Stomach (tissue), 19 donors: ENCODE measurements at regions of chr12 and their contacts with region 1.

Region 1: DNA sequence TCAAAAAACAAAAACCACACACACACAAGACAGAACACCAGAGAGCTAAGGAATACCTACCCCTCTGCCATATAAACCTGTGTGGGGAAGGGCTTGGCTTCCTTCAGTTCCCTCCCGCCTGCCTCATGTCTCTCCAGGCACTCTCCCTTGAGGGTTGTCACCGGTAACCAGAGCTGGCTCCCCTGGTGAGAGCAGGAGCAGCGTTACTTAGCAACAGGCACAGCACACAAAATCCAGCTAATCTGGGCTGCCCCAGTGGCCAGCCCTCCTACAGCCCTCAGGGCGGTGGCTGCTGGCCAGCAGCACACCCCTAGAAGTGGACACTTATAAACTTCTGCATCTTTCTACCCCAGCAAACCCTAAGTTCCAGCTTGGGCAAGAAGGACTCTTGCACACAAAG is 21.6 kb upstream of the NR4A1 start:
- DNase-seq: peak; percentile 37 to 85
- H3K4me3 ChIP-seq: no peak overlapping the region
- H3K27ac ChIP-seq: peak overlapping the region in 2 of 5 donors; percentile 15 to 94
- H3K4me1 ChIP-seq: peaks cover 18 to 48% (median 38%) of the 10 kb centered on the region in 4 donors
- H3K27me3 ChIP-seq: no peaks in the 10 kb centered on the region
- CTCF ChIP-seq: no peak
- EP300 ChIP-seq: no peak
- POLR2A ChIP-seq: no peak

Region 2: DNA sequence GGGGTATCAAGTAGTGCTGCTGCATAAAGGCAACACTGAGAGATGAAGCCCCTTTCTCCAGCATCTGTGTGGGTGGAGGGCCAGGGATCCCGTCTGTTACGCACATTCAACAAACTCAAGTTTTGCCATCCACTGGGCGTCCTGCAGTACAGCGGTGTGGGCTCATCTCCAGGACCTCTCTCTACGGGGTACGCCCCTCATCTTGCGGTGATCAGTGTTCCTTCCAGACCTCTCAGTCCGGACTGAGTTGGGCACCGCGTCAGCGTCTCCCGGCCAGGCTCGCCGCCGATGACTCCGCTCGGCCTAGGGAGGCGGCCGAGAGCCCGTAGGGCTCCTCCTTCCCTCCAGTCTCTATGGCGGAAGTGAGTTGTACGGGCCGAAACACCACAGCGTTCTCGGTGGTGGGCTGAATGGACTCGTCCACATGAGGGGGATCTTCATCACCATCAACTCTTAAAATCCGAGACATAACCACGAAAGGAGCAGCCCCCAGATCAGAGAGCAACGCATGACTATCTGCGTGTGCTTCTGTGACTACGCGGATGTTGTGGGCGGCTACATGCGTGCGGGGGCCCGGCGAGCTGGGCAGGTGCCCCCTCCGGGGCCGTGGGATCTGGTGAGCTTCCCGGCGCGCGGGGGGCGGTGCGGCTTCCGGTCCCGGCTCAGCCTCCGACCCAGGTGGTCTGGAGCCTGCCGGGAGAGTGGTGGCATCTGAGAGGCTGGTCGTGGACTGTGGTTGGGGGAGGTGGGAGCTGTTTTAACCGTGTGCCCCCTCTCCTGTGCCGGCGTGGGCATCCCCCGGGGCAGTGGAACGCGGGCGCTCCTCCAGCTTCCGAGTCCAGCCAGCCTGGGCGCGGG is 39.9 kb after region 1 on chr12 and contains the start of gene ATG101:
- intact Hi-C with region 1: no loop called
- DNase-seq: peak; percentile 91 to 98
- H3K4me3 ChIP-seq: peak within 1 kb of the TSS; percentile 84 to 97 (median 90)
- H3K27ac ChIP-seq: peak within 1 kb of the TSS; percentile 85 to 94 (median 90)
- H3K4me1 ChIP-seq: peaks cover 25 to 49% (median 43%) of the 10 kb centered on the region in 4 donors
- H3K27me3 ChIP-seq: no peaks in the 10 kb centered on the region
- CTCF ChIP-seq: peak in 5 of 7 experiments; percentile 33 to 81 (median 55)
- EP300 ChIP-seq: peak; percentile 33
- POLR2A ChIP-seq: peak in 1 of 4 donors; percentile 72
- total RNA-seq, gene ATG101: 7.6 to 105 (median 36.5) TPM

Region 3: GRCh38 chr12:52082988-52083637 is 53.4 kb after region 1 on chr12:
- intact Hi-C with region 1: loop called (anchors 5 kb)
- DNase-seq: peak; percentile 61 to 84
- H3K4me3 ChIP-seq: no peak overlapping the region
- H3K27ac ChIP-seq: peak overlapping the region; percentile 18 to 80 (median 70)
- H3K4me1 ChIP-seq: peaks cover 16 to 32% (median 23%) of the 10 kb centered on the region in 4 donors
- H3K27me3 ChIP-seq: peaks cover 0 to 11% (median 0%) of the 10 kb centered on the region in 3 donors
- CTCF ChIP-seq: peak in 5 of 7 experiments; percentile 92 to 97 (median 95)
- EP300 ChIP-seq: no peak
- POLR2A ChIP-seq: no peak

Region 4: GRCh38 chr12:52121824-52122539 is 92.3 kb after region 1 on chr12:
- intact Hi-C with region 1: loop called (anchors 5 kb)
- DNase-seq: peak; percentile 78 to 87
- H3K4me3 ChIP-seq: no peak overlapping the region
- H3K27ac ChIP-seq: peak overlapping the region in 1 of 5 donors; percentile 36
- H3K4me1 ChIP-seq: peaks cover 19 to 53% (median 33%) of the 10 kb centered on the region in 4 donors
- H3K27me3 ChIP-seq: peaks cover 0 to 44% (median 0%) of the 10 kb centered on the region in 3 donors
- CTCF ChIP-seq: peak in 5 of 7 experiments; percentile 21 to 77 (median 58)
- EP300 ChIP-seq: no peak
- POLR2A ChIP-seq: no peak